ENCODE measurements at regions of chr16 and their contacts with region 1.

Region 1: GRCh38 chr16:11297492-11298142 is 16.5 kb upstream of the PRM1 start:
- DNase-seq: peak; percentile 82
- ATAC-seq: peak; percentile 95

Region 2: GRCh38 chr16:11315510-11315909 is 17.9 kb after region 1 on chr16:
- intact Hi-C with region 1: no loop called
- DNase-seq: no peak
- ATAC-seq: no peak

Region 3: DNA sequence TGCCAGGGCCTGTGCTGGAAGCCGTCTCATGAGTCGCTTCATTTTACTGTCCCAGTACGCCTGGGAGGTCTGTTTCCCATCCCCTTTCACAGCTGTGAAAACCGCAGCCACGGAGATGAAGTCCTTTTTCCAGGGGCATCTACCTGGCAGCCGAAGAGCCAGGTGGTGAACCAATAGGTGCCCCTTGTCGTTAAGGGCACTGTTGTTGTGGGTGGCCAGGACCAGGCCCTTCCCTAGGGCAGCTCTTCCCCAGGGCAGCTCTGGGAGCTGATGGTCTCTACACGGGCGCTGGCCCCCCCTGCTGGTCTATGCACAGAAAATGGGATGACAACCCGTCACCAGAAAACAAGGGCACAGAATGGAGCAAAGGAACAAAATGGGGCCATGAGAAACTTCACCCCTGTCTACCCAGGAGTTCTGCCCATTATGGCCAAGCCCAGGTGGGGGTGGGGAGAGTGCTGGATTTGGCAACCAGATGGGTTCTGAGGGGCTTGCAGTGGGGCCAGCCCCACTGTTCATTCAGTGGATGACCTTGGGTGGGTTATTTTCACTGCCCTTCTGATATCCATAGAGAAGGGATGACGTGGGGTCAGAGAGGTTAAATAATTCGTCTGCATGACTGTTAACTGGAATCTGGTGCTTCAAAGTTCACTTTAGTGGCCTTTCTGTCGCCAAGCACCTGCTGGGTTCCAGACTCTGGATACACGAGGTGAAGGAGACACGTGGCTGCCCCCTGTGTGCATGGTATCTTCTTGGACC is 59.1 kb after region 1 on chr16:
- intact Hi-C with region 1: loop called (anchors 5 kb)
- DNase-seq: peak; percentile 84
- ATAC-seq: peak; percentile 58

Region 4: DNA sequence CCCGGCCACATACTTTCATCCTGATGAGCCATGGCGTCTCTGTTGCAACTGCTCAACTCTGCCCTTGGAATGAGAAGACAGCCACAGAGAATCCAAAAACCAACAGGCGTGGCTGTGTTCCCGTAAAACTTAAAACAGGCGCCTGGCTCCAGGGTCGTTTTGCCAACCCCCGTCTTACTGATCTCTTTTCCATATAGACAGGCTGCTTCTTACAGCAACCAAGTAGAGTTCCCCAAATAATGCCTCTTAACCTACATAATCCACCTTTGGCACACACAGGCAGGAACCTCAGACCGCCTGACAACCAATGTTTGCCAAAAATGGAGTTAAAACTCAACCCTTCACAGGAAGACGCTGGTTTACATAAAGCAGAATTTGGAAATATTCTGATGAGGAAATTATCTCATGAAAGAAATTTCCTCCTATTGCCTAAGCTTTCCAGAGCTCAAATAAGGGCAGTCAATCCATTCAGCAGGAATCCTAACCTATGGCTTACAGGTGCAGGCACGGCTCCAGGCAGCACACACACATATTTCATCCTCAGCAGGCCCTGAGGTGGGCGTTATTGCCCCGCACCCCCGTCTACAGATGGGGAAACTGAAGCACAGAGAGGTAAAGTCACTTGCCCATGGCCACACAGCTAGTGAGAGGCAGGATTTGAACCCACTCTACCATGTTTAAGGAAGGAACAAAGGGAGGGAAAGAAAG is 253.3 kb after region 1 on chr16:
- intact Hi-C with region 1: no loop called
- DNase-seq: no peak
- ATAC-seq: no peak